ENCODE measurements at regions of chr12 and their contacts with region 1.

Region 1: GRCh38 chr12:9347328-9348127 is 139.3 kb upstream of the PZP start:
- DNase-seq: no peak
- ATAC-seq: no peak
- H3K4me3 ChIP-seq: no peak overlapping the region
- H3K27ac ChIP-seq: no peak overlapping the region
- H3K4me1 ChIP-seq: no peaks in the 10 kb centered on the region
- CTCF ChIP-seq: no peak
- EP300 ChIP-seq: no peak
- POLR2A ChIP-seq: no peak
- RAD21 ChIP-seq: no peak

Region 2: DNA sequence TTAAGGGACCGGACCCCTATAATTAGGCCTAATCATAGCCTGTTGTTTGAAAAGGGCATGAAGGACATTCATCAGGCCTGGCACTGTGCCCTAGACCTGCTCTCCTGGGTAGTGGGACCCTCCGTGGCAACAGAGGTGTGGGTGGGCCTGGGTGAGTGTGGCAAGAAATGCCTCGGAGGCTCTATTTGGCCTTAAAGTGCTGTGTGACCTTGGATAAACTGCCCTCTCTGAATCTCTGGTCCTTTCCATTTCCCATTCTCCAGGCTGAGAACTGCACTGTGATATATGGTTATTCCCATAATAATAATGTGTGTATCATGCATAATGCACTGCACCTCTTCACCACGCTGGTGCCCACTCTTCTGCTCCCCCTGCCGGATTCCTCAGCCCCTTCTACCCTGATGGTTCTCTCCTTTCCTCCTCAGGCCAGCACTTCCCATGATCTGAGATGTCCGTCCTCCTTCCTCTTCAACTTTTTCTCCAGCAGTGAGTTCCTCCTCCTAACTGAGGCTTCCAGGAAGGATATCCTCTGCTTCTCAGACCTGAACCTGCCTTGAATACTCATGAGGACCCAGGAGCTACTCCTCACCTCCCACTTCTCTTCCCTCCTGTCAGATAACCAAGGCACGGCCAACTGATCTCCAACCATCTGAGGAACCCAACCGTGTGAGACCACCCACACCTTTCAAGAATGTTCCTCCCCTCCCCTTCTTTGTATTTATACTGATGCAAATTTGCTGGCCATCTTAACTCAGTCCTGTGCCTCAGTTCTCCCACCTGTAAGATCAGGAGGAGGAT is 28.3 kb before region 1 on chr12:
- CTCF ChIA-PET with region 1: no interaction called
- POLR2A ChIA-PET with region 1: no interaction called
- DNase-seq: no peak
- ATAC-seq: peak in 1 of 2 experiments; percentile 50; a peak in 3 of 6 replicates
- H3K4me3 ChIP-seq: no peak overlapping the region
- H3K27ac ChIP-seq: no peak overlapping the region
- H3K4me1 ChIP-seq: no peaks in the 10 kb centered on the region
- CTCF ChIP-seq: no peak
- EP300 ChIP-seq: no peak
- POLR2A ChIP-seq: no peak
- RAD21 ChIP-seq: no peak

Region 3: GRCh38 chr12:9331218-9331626 is 16.3 kb before region 1 on chr12:
- CTCF ChIA-PET with region 1: interaction called, 10 read pairs
- POLR2A ChIA-PET with region 1: no interaction called
- DNase-seq: peak; percentile 35 to 49
- ATAC-seq: peak; percentile 79 to 90; a peak in 5 of 6 replicates
- H3K4me3 ChIP-seq: no peak overlapping the region
- H3K27ac ChIP-seq: no peak overlapping the region
- H3K4me1 ChIP-seq: 0 out of 3 replicates have a peak, but pooled peaks cover 6% of the 10 kb centered on the region
- CTCF ChIP-seq: peak; percentile 85
- EP300 ChIP-seq: no peak
- POLR2A ChIP-seq: no peak
- RAD21 ChIP-seq: peak; percentile 83 to 85

Measured in A549 (cell line).